Breast epithelium (tissue), 4 donors: ENCODE measurements at regions of chr12 and their contacts with region 1.

Region 1: DNA sequence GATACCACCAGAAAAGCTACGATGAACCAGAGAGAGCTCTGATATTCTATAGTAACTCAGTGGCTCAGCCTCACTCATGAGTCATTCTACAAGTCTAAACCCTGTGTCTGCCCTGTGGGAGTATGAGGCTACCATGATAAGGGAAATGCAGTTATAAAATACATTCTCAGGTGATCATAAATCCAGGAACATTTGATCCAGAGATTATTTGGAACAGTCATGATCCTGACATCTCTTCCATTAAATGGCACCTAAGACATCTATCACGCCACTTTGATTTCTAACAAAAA is 202.6 kb upstream of the RASSF8 start:
- DNase-seq: no peak
- H3K4me3 ChIP-seq: no peak overlapping the region
- H3K27ac ChIP-seq: no peak overlapping the region
- H3K4me1 ChIP-seq: no peaks in the 10 kb centered on the region
- H3K27me3 ChIP-seq: no peaks in the 10 kb centered on the region
- CTCF ChIP-seq: no peak
- POLR2A ChIP-seq: no peak

Region 2: GRCh38 chr12:25653487-25654175 is 102.3 kb before region 1 on chr12:
- intact Hi-C with region 1: no loop called
- DNase-seq: peak in 1 of 2 donors; percentile 58
- H3K4me3 ChIP-seq: no peak overlapping the region
- H3K27ac ChIP-seq: no peak overlapping the region
- H3K4me1 ChIP-seq: no peaks in the 10 kb centered on the region
- H3K27me3 ChIP-seq: no peaks in the 10 kb centered on the region
- CTCF ChIP-seq: no peak
- POLR2A ChIP-seq: no peak

Region 3: GRCh38 chr12:25713264-25713663 is 42.7 kb before region 1 on chr12:
- intact Hi-C with region 1: no loop called
- DNase-seq: no peak
- H3K4me3 ChIP-seq: no peak overlapping the region
- H3K27ac ChIP-seq: no peak overlapping the region
- H3K4me1 ChIP-seq: no peaks in the 10 kb centered on the region
- H3K27me3 ChIP-seq: no peaks in the 10 kb centered on the region
- CTCF ChIP-seq: no peak
- POLR2A ChIP-seq: no peak

Region 4: GRCh38 chr12:25725931-25726330 is 30.0 kb before region 1 on chr12:
- intact Hi-C with region 1: loop called (anchors 2 kb)
- DNase-seq: no peak
- H3K4me3 ChIP-seq: no peak overlapping the region
- H3K27ac ChIP-seq: no peak overlapping the region
- H3K4me1 ChIP-seq: peaks cover 0 to 7% of the 10 kb centered on the region in 2 donors
- H3K27me3 ChIP-seq: no peaks in the 10 kb centered on the region
- CTCF ChIP-seq: no peak
- POLR2A ChIP-seq: no peak

Region 5: DNA sequence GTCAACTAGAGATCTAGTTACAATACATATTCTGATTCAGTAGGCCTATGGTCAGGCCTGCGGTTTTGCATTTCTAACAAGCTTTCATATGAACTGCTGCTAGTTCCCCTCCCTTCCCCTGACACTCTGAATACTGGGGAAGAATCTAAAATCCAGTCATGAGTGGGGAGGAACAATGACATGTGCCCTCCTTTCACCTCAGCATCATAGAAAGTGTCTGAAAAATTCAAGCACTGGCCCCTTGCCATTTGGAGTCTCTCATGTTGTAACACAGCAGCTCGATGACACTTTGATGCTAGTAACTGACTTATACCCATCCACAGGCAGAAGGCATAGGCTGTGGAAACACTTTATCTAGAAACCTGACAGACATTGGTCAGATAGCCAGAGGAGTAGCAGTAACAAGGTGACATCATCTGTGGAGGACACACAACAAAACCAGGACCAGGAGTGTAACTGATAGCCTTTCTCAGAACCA is 40.6 kb after region 1 on chr12:
- intact Hi-C with region 1: no loop called
- DNase-seq: no peak
- H3K4me3 ChIP-seq: no peak overlapping the region
- H3K27ac ChIP-seq: no peak overlapping the region
- H3K4me1 ChIP-seq: no peaks in the 10 kb centered on the region
- H3K27me3 ChIP-seq: no peaks in the 10 kb centered on the region
- CTCF ChIP-seq: no peak
- POLR2A ChIP-seq: no peak